ENCODE measurements at regions of chr20 and their contacts with region 1.

Region 1: GRCh38 chr20:1325173-1326030 is 3.5 kb downstream of the SDCBP2 start:
- DNase-seq: peak; percentile 97 to 98 (median 98)
- ATAC-seq: peak; percentile 76 to 90 (median 87)
- H3K4me3 ChIP-seq: peak overlapping the region; percentile 66 to 86 (median 74)
- H3K27ac ChIP-seq: peak overlapping the region; percentile 98 to 100 (median 99)
- H3K4me1 ChIP-seq: peaks cover 0 to 44% (median 24%) of the 10 kb centered on the region in 4 donors
- H3K27me3 ChIP-seq: no peaks in the 10 kb centered on the region
- CTCF ChIP-seq: peak in 1 of 4 donors; percentile 20
- POLR2A ChIP-seq: peak; percentile 98

Region 2: GRCh38 chr20:1392823-1393506 is 67.6 kb after region 1 on chr20 and contains the start of gene FKBP1A:
- intact Hi-C with region 1: loop called (anchors 5 to 10 kb)
- DNase-seq: peak; percentile 93 to 94 (median 93)
- ATAC-seq: peak; percentile 95 to 98 (median 97)
- H3K4me3 ChIP-seq: peak within 1 kb of the TSS; percentile 78 to 87 (median 79)
- H3K27ac ChIP-seq: peak within 1 kb of the TSS; percentile 64 to 77 (median 69)
- H3K4me1 ChIP-seq: peaks cover 0 to 42% (median 11%) of the 10 kb centered on the region in 4 donors
- H3K27me3 ChIP-seq: no peaks in the 10 kb centered on the region
- CTCF ChIP-seq: peak; percentile 16 to 41 (median 27)
- POLR2A ChIP-seq: peak; percentile 97
- total RNA-seq, gene FKBP1A: 56.9 to 86.9 (median 63.4) TPM

Region 3: GRCh38 chr20:1491281-1491840 is 166.0 kb after region 1 on chr20 and contains the start of gene SIRPB2:
- intact Hi-C with region 1: no loop called
- DNase-seq: peak; percentile 52 to 75 (median 60)
- ATAC-seq: peak; percentile 69 to 79 (median 78)
- H3K4me3 ChIP-seq: peak within 1 kb of the TSS in 2 of 3 donors; percentile 8 to 37
- H3K27ac ChIP-seq: peak within 1 kb of the TSS; percentile 44 to 50 (median 49)
- H3K4me1 ChIP-seq: no peaks in the 10 kb centered on the region
- H3K27me3 ChIP-seq: no peaks in the 10 kb centered on the region
- CTCF ChIP-seq: no peak
- POLR2A ChIP-seq: peak; percentile 48
- total RNA-seq, gene SIRPB2: 0.55 to 5.6 (median 2.4) TPM